PC-3 (cell line): ENCODE measurements at regions of chr14 and their contacts with region 1.

Region 1: GRCh38 chr14:34436118-34436880 is 25.7 kb downstream of the SPTSSA start:
- DNase-seq: peak; percentile 79
- ATAC-seq: peak; percentile 87
- H3K4me3 ChIP-seq: no peak overlapping the region
- H3K27ac ChIP-seq: peak overlapping the region; percentile 52; the same call in 1 of the 2 replicates
- H3K4me1 ChIP-seq: peaks cover 42% of the 10 kb centered on the region
- H3K27me3 ChIP-seq: no peaks in the 10 kb centered on the region
- CTCF ChIP-seq: no peak

Region 2: GRCh38 chr14:34331728-34332623 is 104.3 kb before region 1 on chr14:
- CTCF ChIA-PET with region 1: no interaction called
- POLR2A ChIA-PET with region 1: no interaction called
- intact Hi-C with region 1: loop called (anchors 5 kb)
- DNase-seq: peak; percentile 85
- ATAC-seq: peak; percentile 88
- H3K4me3 ChIP-seq: peak overlapping the region; percentile 20; the same call in 1 of the 2 replicates
- H3K27ac ChIP-seq: peak overlapping the region; percentile 66
- H3K4me1 ChIP-seq: peaks cover 21% of the 10 kb centered on the region
- H3K27me3 ChIP-seq: no peaks in the 10 kb centered on the region
- CTCF ChIP-seq: peak; percentile 94

Region 3: GRCh38 chr14:34365309-34365915 is 70.9 kb before region 1 on chr14:
- CTCF ChIA-PET with region 1: no interaction called
- POLR2A ChIA-PET with region 1: no interaction called
- intact Hi-C with region 1: loop called (anchors 2 kb)
- DNase-seq: peak; percentile 29
- ATAC-seq: no peak
- H3K4me3 ChIP-seq: no peak overlapping the region
- H3K27ac ChIP-seq: peak overlapping the region; percentile 96
- H3K4me1 ChIP-seq: peaks cover 65% of the 10 kb centered on the region
- H3K27me3 ChIP-seq: no peaks in the 10 kb centered on the region
- CTCF ChIP-seq: peak; percentile 52

Region 4: DNA sequence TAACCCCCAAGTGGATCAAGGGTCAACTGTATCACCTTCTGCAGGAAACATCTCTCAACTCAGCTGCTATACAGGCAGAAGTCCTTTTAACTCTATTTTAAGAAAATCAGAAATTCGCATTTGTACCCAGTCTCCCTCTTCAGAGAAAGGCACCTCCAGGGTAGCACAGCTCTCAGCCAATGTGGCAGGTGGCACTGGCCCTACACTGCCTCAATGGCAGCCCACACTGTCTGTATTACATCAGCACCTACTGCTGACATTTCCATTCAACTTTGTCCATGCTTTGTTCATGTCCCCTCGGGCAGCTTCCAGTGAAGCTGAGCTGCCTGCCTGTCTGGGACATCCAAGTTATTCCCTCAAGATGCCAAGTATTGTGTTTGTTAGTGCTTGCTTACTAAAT is 16.9 kb after region 1 on chr14:
- CTCF ChIA-PET with region 1: interaction called, 9 read pairs
- POLR2A ChIA-PET with region 1: interaction called, 12 read pairs
- intact Hi-C with region 1: loop called (anchors 2 kb)
- DNase-seq: no peak
- ATAC-seq: no peak
- H3K4me3 ChIP-seq: no peak overlapping the region
- H3K27ac ChIP-seq: no peak overlapping the region
- H3K4me1 ChIP-seq: peaks cover 42% of the 10 kb centered on the region
- H3K27me3 ChIP-seq: no peaks in the 10 kb centered on the region
- CTCF ChIP-seq: no peak